Head of caudate nucleus (tissue), 42 donors: ENCODE measurements at regions of chr4 and their contacts with region 1.

Region 1: DNA sequence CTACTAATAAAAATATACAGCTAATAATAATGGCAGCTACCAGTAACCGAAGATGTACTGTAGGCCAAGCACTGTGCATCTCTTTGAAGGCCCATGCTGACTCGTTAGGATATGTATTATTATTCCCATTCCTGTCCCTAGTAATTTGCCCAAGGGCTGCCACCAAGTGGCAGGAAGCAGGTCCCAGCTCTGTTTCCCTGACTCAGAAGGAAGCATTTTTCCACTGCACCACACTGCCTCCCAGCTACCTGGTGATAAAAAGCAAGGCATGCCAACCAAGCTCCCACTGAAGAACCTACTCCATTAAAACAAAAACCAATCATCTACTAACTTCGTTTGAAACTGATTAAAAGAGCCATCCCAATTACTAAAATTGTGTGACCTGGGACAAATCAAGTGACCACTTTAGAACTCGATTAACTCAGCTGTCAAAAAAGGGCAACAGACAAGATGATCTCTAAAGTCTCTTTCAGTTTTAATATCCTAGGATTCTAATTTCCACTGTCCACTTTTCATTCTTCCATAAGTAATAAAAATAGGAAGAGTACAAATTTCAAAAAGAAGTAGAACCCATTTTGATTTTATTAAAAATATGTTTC is 24.3 kb upstream of the PGM2 start:
- DNase-seq: peak in 41 of 42 donors; percentile 13 to 87 (median 63)

Region 2: DNA sequence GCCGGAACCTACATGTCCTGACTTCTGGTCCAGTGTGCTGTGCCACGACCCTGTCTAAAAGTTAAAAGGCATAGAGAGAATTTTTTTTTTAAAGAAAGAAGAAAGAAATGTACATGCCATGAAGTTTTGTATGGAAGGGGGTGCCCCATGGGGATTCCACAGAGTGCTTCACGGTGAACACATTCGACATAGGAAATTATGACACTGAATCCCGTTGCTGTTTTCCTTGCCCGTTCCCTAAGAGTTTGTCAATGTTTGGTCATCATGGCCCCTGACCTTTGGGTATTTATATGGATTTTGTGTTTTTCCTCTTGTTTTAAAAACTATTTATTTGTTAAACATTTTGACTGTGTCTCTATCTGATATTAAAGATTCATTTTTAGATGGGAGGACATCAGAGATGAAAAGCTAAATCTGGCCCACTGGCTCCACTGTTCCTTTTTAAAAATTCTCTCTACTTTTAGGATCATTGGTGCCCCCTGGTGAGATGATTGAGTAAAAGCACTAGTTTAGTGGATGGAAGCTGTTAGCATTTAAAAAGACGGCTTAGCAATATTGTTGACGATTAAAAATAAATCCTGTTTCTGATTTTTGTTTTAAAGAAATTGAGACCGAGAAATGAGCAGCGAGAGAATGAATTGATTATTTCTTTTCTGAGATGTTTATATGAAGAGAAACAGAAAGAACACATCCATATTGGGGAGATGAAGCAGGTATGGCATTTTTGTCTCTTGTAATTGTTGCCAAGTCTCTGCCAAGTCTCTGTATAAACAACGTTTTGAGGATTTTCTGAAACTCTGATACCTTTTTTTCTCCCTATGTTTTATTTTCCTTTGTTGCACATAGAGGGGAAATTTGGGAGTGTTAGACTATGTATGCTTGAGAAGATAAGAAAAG is 233.1 kb after region 1 on chr4:
- intact Hi-C with region 1: loop called (anchors 10 kb)
- DNase-seq: peak in 16 of 42 donors; percentile 27 to 78 (median 48)